Ovary (tissue), 10 donors: ENCODE measurements at regions of chr3 and their contacts with region 1.

Region 1: GRCh38 chr3:47164007-47164881 is at the start of gene SETD2:
- DNase-seq: peak; percentile 92 to 95 (median 94)
- H3K4me3 ChIP-seq: peak within 1 kb of the TSS; percentile 98
- H3K27ac ChIP-seq: peak within 1 kb of the TSS; percentile 93 to 95
- H3K4me1 ChIP-seq: peaks cover 13% of the 10 kb centered on the region
- H3K27me3 ChIP-seq: no peaks in the 10 kb centered on the region
- CTCF ChIP-seq: peak in 2 of 3 donors; percentile 59 to 61
- EP300 ChIP-seq: no peak
- POLR2A ChIP-seq: peak; percentile 42
- total RNA-seq, gene SETD2: 46.4 to 62.9 (median 51.2) TPM

Region 2: GRCh38 chr3:47009225-47010110 is 154.8 kb before region 1 on chr3:
- intact Hi-C with region 1: loop called in 2 of 4 experiments (anchors 10 kb)
- DNase-seq: peak; percentile 93 to 95 (median 94)
- H3K4me3 ChIP-seq: peak overlapping the region; percentile 76
- H3K27ac ChIP-seq: peak overlapping the region; percentile 35 to 82
- H3K4me1 ChIP-seq: peaks cover 4% of the 10 kb centered on the region
- H3K27me3 ChIP-seq: no peaks in the 10 kb centered on the region
- CTCF ChIP-seq: peak in 1 of 3 donors; percentile 7
- EP300 ChIP-seq: no peak
- POLR2A ChIP-seq: peak; percentile 91

Region 3: DNA sequence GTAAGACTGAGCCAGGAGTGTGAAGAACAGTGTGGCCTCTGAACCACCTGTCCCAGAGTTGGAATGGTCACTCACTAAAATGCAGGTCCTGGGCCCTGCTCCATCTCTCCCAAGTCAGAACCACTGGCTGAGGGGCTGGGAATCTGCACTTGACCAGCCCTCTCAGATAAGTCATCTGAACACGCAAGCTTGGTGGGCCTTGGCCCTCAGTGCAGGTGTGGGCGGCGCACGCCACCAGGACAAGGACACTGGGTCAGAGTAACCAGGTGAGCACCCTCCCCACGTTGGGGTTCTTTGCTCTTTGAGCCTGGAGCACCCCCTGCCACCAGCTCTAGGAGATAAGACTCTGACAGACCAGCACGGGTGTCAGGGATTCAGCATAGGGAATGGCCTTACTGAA is 75.7 kb after region 1 on chr3:
- intact Hi-C with region 1: no loop called
- DNase-seq: no peak
- H3K4me3 ChIP-seq: no peak overlapping the region
- H3K27ac ChIP-seq: no peak overlapping the region
- H3K4me1 ChIP-seq: no peaks in the 10 kb centered on the region
- H3K27me3 ChIP-seq: no peaks in the 10 kb centered on the region
- CTCF ChIP-seq: no peak
- EP300 ChIP-seq: no peak
- POLR2A ChIP-seq: no peak

Region 4: GRCh38 chr3:47282424-47283192 is 118.4 kb after region 1 on chr3 and contains the starts of genes KIF9 and KLHL18:
- intact Hi-C with region 1: no loop called
- DNase-seq: peak; percentile 92 to 95 (median 94)
- H3K4me3 ChIP-seq: peak within 1 kb of the TSS; percentile 80
- H3K27ac ChIP-seq: peak within 1 kb of the TSS; percentile 51 to 77
- H3K4me1 ChIP-seq: peaks cover 9% of the 10 kb centered on the region
- H3K27me3 ChIP-seq: no peaks in the 10 kb centered on the region
- CTCF ChIP-seq: peak in 1 of 3 donors; percentile 13
- EP300 ChIP-seq: peak; percentile 65
- POLR2A ChIP-seq: peak; percentile 53
- total RNA-seq, gene KIF9: 2.5 to 29.4 (median 4.5) TPM
- total RNA-seq, gene KLHL18: 6.2 to 23.7 (median 19.8) TPM